Activated CD4-positive, alpha-beta memory T cell treated with anti-CD3 and anti-CD28 coated beads for 36 hours (primary cell): ENCODE measurements at regions of chr3 and their contacts with region 1.

Region 1: DNA sequence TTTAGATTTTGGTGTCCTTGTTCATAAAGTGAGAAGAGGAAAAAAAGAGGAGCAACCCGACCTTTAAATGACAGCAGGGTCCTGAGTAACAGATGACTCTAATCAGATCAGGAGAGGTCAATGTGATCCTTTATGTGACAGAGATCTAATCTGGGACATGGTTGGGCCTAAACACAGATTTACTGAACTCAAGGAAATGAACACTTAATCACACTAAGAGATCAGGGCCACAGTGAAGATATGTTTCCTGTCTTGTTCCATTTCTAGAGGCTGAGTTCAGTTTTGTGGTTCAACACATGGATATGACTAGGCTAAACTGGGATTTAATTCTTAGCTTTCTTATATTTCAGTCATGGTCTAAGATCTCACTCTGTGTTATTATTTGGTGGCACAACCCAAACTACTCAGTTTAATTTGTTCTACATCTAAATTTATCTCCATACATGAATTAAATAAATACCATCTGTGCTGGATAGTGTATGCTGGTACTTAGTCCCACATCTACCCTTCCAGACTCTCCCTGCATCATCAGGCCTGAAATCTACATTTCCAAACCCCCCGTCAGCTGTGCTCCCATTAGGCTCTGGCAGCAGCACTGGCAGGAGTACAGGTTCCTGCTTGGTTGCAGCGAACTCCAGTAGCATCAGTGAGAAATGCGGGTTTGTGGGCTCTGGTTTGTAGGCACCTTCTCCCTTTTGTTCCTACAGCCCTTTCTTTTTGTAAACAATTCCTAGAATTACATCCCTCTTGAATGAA is 22.6 kb downstream of the SFMBT1 start:
- DNase-seq: no peak
- H3K4me3 Mint-ChIP-seq: no peak overlapping the region
- H3K27ac Mint-ChIP-seq: peak overlapping the region; percentile 1
- H3K4me1 Mint-ChIP-seq: peaks cover 59% of the 10 kb centered on the region
- H3K27me3 Mint-ChIP-seq: no peaks in the 10 kb centered on the region

Region 2: DNA sequence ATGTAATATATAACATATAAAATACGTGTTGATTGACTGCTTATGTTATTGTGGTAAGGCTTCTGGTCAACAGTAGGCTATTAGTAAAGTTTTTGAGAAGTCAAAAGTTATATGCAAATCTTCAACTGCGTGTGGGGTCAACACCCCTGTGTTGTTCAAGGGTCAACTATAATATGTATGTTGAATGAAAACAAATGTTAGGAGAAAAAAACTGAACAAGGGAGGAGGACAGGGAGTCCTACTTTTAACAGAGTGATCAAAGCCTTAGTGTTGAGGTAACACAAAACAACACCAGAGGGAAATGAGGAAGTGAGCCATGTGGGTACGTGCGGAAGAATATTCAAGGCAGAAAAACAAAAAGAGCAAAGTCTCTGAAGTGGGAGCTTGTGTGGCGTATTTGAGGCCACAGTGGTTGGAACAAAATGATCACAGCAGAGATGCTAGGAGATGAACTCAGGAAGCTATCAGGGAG is 39.9 kb before region 1 on chr3:
- CTCF ChIA-PET with region 1: no interaction called
- POLR2A ChIA-PET with region 1: no interaction called
- intact Hi-C with region 1: loop called (anchors 1 kb)
- DNase-seq: peak; percentile 86
- H3K4me3 Mint-ChIP-seq: peak overlapping the region; percentile 16
- H3K27ac Mint-ChIP-seq: peak overlapping the region; percentile 72
- H3K4me1 Mint-ChIP-seq: peaks cover 38% of the 10 kb centered on the region
- H3K27me3 Mint-ChIP-seq: no peaks in the 10 kb centered on the region

Region 3: DNA sequence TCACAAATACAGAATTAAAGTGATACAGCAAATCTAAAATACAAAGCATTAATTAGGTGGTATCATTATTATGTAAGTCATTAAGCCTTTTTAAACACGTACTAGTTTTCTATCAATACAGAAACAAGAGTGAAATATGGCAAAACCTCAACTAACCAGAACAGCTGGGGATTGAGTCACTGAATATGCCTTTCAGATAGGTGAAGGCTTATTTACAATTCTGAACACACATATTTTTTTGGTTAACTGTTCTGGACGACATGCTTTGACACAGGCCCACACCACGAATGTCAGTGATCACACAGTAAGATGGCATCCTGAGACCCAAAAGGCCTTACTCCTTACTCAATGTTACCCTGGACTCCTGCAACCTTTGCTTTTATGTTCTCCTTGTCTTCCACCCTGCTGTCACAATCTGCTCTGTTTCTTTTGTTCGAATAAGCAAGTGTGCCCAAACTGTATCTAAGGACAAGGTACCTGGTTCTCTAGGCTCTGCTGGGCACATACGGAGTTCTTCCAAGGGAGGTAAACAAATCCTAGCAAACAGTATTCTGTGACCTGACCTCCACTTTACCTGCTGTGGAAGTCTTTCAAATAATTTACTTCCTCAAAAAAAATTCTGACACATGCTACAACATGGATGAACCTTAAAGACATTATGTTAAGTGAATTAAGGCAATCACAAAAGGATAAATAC is 15.6 kb after region 1 on chr3:
- CTCF ChIA-PET with region 1: interaction called, 3 read pairs
- POLR2A ChIA-PET with region 1: interaction called, 4 read pairs
- intact Hi-C with region 1: loop called (anchors 2 kb)
- DNase-seq: no peak
- H3K4me3 Mint-ChIP-seq: no peak overlapping the region
- H3K27ac Mint-ChIP-seq: peak overlapping the region; percentile 71
- H3K4me1 Mint-ChIP-seq: peaks cover 78% of the 10 kb centered on the region
- H3K27me3 Mint-ChIP-seq: no peaks in the 10 kb centered on the region